ENCODE measurements at regions of chr14 and their contacts with region 1.

Region 1: DNA sequence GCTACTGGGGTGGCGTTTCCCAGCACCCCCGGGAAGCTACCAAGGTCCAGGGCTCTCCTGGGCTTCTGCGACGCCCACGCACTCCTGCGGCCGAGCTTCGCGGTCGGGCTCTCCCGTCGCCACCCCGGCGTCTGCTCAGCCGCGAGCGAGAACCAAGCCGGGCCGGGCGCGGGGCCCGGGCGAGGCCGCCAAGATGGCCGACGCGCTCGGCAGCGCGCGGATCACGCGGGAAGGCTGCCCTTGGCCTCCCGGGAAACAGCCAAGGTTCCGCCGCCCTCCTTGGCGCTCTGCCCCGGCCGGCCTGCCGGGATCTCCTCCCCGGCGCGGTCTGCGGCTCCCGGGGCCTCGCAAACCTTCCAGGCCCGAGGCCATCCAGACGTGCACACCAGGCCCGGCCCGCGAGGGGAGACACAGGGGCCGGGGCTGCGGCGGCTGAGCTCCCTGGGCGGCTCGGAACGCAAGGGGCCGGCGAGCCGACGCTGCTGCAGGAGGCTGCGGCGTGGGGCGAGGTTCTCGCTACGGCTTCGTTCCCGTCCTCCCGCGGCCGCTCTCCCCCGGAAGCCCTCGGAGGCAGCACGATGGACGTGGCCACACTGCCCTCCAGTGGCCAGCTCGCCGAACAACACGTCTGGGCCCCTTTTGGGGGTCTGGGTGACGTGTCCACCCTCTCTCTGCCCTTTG is 23.5 kb upstream of the ZFP36L1 start:
- DNase-seq: peak; percentile 84 to 88 (median 86)
- H3K4me3 ChIP-seq: peak overlapping the region; percentile 32 to 44
- H3K4me3 Mint-ChIP-seq: peak overlapping the region; percentile 82 to 93 (median 86)
- H3K27ac ChIP-seq: peak overlapping the region; percentile 81
- H3K27ac Mint-ChIP-seq: peak overlapping the region; percentile 95 to 98 (median 95)
- H3K4me1 ChIP-seq: peaks cover 88% of the 10 kb centered on the region
- H3K4me1 Mint-ChIP-seq: peaks cover 50 to 86% (median 67%) of the 10 kb centered on the region in 4 donors
- H3K27me3 ChIP-seq: no peaks in the 10 kb centered on the region
- H3K27me3 Mint-ChIP-seq: no peaks in the 10 kb centered on the region

Region 2: DNA sequence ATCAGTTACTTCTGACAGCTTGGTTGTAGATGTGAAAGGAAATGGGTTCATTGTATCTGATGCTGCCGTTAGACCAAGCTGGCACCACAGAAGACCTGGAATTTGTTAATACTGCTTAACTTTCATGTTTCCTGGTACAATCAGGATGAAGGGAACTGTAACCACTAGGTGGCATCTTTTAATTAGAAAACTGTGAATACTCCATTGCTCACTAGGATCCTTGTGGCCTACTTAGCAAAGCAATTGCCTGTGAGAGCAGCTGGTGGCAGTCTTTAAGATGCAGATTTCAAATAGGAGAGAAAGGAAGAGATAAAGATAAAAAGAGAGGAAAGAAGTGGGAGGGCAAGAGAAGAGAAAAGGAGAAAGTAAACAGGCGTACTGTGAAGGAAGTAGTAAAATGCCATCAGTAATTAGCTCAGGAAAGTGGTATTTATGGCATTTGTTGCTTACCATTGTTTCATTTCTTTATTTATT is 882.4 kb before region 1 on chr14:
- CTCF ChIA-PET with region 1: interaction called, 67 read pairs
- POLR2A ChIA-PET with region 1: interaction called, 8 read pairs
- intact Hi-C with region 1: loop called (anchors 1 kb)
- DNase-seq: peak in 4 of 5 donors; percentile 37 to 51 (median 46)
- H3K4me3 ChIP-seq: no peak overlapping the region
- H3K4me3 Mint-ChIP-seq: no peak overlapping the region
- H3K27ac ChIP-seq: no peak overlapping the region
- H3K27ac Mint-ChIP-seq: peak overlapping the region in 5 of 7 donors; percentile 9 to 94 (median 77)
- H3K4me1 ChIP-seq: peaks cover 7% of the 10 kb centered on the region
- H3K4me1 Mint-ChIP-seq: peaks cover 5 to 6% (median 5%) of the 10 kb centered on the region in 4 donors
- H3K27me3 ChIP-seq: no peaks in the 10 kb centered on the region
- H3K27me3 Mint-ChIP-seq: no peaks in the 10 kb centered on the region

Region 3: GRCh38 chr14:68268197-68268596 is 548.2 kb before region 1 on chr14:
- CTCF ChIA-PET with region 1: interaction called, 13 read pairs
- POLR2A ChIA-PET with region 1: interaction called, 11 read pairs
- intact Hi-C with region 1: no loop called
- DNase-seq: no peak
- H3K4me3 ChIP-seq: no peak overlapping the region
- H3K4me3 Mint-ChIP-seq: peak overlapping the region in 6 of 8 donors; percentile 18 to 58 (median 48)
- H3K27ac ChIP-seq: no peak overlapping the region
- H3K27ac Mint-ChIP-seq: peak overlapping the region; percentile 61 to 93 (median 85)
- H3K4me1 ChIP-seq: peaks cover 43% of the 10 kb centered on the region
- H3K4me1 Mint-ChIP-seq: peaks cover 29 to 55% (median 37%) of the 10 kb centered on the region in 4 donors
- H3K27me3 ChIP-seq: no peaks in the 10 kb centered on the region
- H3K27me3 Mint-ChIP-seq: no peaks in the 10 kb centered on the region

Region 4: GRCh38 chr14:68506021-68506644 is 310.3 kb before region 1 on chr14:
- CTCF ChIA-PET with region 1: interaction called, 17 read pairs
- POLR2A ChIA-PET with region 1: interaction called, 59 read pairs
- intact Hi-C with region 1: no loop called
- DNase-seq: peak in 2 of 5 donors; percentile 9 to 39
- H3K4me3 ChIP-seq: peak overlapping the region; percentile 15 to 28
- H3K4me3 Mint-ChIP-seq: peak overlapping the region; percentile 63 to 86 (median 74)
- H3K27ac ChIP-seq: peak overlapping the region; percentile 27
- H3K27ac Mint-ChIP-seq: peak overlapping the region; percentile 60 to 93 (median 89)
- H3K4me1 ChIP-seq: peaks cover 45% of the 10 kb centered on the region
- H3K4me1 Mint-ChIP-seq: peaks cover 40 to 63% (median 52%) of the 10 kb centered on the region in 4 donors
- H3K27me3 ChIP-seq: no peaks in the 10 kb centered on the region
- H3K27me3 Mint-ChIP-seq: no peaks in the 10 kb centered on the region

Region 5: DNA sequence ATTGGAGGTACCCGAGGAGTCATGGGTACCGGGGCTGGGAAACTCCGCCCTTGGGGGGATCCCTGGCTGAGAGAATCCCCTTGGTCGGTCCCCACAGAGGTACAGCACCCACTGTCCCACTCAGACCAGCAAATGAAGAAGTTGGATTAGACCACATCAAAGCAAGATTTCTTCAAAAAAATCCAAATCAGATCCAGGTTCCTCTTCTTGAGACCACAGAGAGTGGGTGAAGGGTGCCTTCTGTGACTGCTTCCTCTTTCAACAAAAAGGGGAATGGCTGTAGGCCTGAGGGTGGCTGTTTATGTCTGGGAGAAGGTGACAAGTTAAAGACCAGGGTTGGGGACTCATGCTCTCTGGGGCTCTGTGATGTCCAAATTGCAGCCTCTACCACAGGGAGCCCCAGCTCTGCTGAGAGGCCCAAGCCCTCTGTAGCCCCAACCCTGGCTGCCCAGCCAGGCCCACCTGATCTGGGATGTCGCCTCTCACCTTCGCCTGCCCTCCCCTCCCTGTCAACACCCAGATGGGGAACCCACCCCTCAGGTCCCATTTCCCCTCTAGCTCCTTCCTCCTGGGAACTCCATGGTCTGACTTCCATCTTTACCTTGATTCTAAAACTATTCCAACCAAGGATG is 74.4 kb before region 1 on chr14:
- CTCF ChIA-PET with region 1: no interaction called
- POLR2A ChIA-PET with region 1: no interaction called
- intact Hi-C with region 1: no loop called
- DNase-seq: no peak
- H3K4me3 ChIP-seq: no peak overlapping the region
- H3K4me3 Mint-ChIP-seq: no peak overlapping the region
- H3K27ac ChIP-seq: no peak overlapping the region
- H3K27ac Mint-ChIP-seq: peak overlapping the region in 1 of 7 donors; percentile 20
- H3K4me1 ChIP-seq: no peaks in the 10 kb centered on the region
- H3K4me1 Mint-ChIP-seq: peaks cover 0 to 9% (median 2%) of the 10 kb centered on the region in 4 donors
- H3K27me3 ChIP-seq: no peaks in the 10 kb centered on the region
- H3K27me3 Mint-ChIP-seq: peaks cover 0 to 2% of the 10 kb centered on the region in 2 donors

Region 6: DNA sequence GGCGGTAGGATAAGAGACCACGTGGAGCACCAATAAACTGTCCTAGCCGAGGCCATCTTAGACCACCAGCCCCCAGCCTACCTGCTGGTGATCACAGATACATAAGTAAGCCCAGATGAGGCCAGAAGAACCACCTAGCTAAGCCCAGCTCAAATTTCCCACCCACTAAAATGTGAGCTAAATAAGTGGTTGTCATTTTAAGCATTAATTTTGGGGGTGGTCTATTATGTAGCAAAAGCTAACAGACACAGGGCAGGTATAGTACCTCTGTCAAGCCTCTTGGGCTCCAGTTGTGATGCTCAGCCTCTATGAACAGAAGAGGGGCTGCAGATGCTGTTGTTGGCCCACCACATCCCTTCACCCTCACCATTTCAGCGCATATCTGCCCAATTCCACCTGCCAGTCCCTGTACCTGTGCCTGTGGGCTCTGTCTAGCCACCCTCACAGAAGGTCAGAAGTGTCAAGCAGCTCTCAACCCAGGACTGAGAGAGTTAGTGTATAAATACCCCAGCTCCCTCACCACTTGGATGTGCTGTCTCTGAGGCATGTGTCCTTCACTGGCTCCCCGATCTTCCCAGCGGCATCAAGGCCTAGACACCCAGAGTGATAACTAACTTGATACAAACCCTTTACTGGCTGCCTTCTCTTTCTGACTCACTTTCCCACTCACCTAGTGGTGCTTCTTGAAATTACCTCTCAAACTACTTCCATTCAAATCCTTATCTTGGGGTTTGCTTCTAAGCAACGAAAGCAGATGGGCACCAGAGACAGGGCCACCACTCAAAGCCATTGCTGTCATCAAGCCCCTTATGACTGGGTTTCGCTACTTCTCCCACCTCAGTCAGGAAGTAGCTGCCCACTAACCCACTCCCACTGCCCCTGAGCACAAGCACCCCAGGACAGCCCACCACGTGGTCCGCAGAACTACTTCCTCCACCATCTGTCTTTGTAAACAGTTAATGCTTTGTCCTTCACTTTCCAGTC is 41.0 kb before region 1 on chr14:
- CTCF ChIA-PET with region 1: interaction called, 83 read pairs
- POLR2A ChIA-PET with region 1: interaction called, 1,973 read pairs
- intact Hi-C with region 1: no loop called
- DNase-seq: no peak
- H3K4me3 ChIP-seq: no peak overlapping the region
- H3K4me3 Mint-ChIP-seq: peak overlapping the region in 2 of 8 donors; percentile 11 to 20
- H3K27ac ChIP-seq: no peak overlapping the region
- H3K27ac Mint-ChIP-seq: peak overlapping the region in 5 of 7 donors; percentile 29 to 84 (median 57)
- H3K4me1 ChIP-seq: peaks cover 90% of the 10 kb centered on the region
- H3K4me1 Mint-ChIP-seq: peaks cover 62 to 98% (median 77%) of the 10 kb centered on the region in 4 donors
- H3K27me3 ChIP-seq: no peaks in the 10 kb centered on the region
- H3K27me3 Mint-ChIP-seq: no peaks in the 10 kb centered on the region

Region 7: GRCh38 chr14:68843471-68844209 is 27.2 kb after region 1 on chr14:
- CTCF ChIA-PET with region 1: interaction called, 63 read pairs
- POLR2A ChIA-PET with region 1: interaction called, 11 read pairs
- intact Hi-C with region 1: loop called (anchors 1 kb)
- DNase-seq: peak; percentile 61 to 72 (median 66)
- H3K4me3 ChIP-seq: no peak overlapping the region
- H3K4me3 Mint-ChIP-seq: peak overlapping the region in 4 of 8 donors; percentile 39 to 75 (median 55)
- H3K27ac ChIP-seq: no peak overlapping the region
- H3K27ac Mint-ChIP-seq: peak overlapping the region in 4 of 7 donors; percentile 11 to 72 (median 59)
- H3K4me1 ChIP-seq: peaks cover 28% of the 10 kb centered on the region
- H3K4me1 Mint-ChIP-seq: peaks cover 18 to 37% (median 26%) of the 10 kb centered on the region in 4 donors
- H3K27me3 ChIP-seq: no peaks in the 10 kb centered on the region
- H3K27me3 Mint-ChIP-seq: peaks cover 1 to 2% of the 10 kb centered on the region in 2 donors

Region 8: DNA sequence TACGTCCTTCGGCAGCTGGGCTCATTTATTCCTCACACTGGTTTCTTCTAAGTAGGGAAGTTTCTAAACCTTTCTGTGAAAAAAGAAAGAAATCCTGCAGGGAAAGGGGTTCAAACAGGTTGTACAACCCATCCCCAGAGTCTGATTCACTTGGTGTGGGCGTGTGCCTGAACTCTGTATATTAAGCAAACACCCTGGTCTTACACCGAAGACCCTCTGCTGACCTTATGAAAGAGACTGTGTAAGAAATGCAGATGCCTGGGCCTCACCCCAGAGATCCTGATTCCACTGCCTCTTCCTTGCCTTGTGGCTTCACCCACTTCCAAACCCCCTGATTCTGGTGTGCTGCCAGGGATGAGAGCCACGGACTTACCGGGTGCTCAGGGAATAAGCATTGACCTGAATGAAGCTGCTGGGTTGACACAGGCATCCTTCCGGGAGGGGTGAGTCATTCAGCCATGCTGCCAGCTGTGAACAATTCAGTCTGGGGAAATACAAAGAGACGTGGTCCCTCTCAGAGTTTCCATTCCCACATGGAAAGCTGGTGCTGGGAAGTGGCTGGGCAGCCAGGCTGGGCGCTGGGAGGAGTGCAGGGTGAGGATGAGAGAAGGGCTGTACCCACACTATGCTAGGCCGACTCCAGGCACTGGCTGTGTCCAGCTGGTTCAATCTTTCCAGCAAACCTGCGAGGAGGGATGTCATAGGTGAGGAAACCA is 189.2 kb after region 1 on chr14:
- CTCF ChIA-PET with region 1: no interaction called
- POLR2A ChIA-PET with region 1: no interaction called
- intact Hi-C with region 1: no loop called
- DNase-seq: no peak
- H3K4me3 ChIP-seq: no peak overlapping the region
- H3K4me3 Mint-ChIP-seq: no peak overlapping the region
- H3K27ac ChIP-seq: no peak overlapping the region
- H3K27ac Mint-ChIP-seq: peak overlapping the region in 2 of 7 donors; percentile 51 to 83
- H3K4me1 ChIP-seq: no peaks in the 10 kb centered on the region
- H3K4me1 Mint-ChIP-seq: peaks cover 0 to 6% (median 2%) of the 10 kb centered on the region in 4 donors
- H3K27me3 ChIP-seq: no peaks in the 10 kb centered on the region
- H3K27me3 Mint-ChIP-seq: peaks cover 0 to 1% of the 10 kb centered on the region in 2 donors

Region 9: DNA sequence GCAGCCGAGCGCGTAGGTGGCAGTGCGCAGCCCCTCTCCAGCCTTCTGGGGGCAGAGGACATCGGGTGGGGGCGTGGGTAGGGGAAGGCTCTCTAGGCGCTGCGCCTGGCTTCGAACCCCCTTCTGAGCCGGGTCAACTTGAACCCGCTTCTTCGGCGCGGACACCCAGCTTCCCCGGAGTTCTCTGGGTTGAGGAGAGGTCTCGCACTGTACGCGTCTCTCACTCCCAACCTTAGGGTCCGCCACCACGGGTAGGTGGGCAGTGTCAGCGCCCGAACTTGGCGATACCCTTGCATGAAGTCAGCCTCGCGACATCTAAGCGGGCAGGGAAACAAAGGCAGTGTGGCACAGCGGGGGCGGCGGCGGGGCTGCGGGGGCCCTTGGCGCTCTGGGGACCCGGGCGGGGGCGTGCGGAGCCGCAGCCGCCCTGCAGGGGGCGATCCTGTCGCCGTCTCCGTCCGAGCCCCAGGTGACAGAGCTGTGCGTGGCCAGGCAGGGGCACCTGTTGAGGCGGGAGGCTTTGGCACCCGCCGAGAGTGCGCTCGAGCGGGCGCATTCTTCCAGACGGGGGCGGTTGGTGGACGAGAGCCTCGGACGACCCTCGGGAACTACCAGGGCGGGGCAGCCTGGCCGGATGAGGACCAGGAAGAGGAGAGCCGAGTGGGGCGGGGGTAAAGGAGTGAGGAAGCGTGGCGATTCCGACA is 444.6 kb after region 1 on chr14:
- CTCF ChIA-PET with region 1: no interaction called
- POLR2A ChIA-PET with region 1: no interaction called
- intact Hi-C with region 1: no loop called
- DNase-seq: peak in 4 of 5 donors; percentile 9 to 16 (median 12)
- H3K4me3 ChIP-seq: peak overlapping the region in 1 of 2 donors; percentile 19
- H3K4me3 Mint-ChIP-seq: peak overlapping the region; percentile 42 to 82 (median 71)
- H3K27ac ChIP-seq: no peak overlapping the region
- H3K27ac Mint-ChIP-seq: no peak overlapping the region
- H3K4me1 ChIP-seq: peaks cover 11% of the 10 kb centered on the region
- H3K4me1 Mint-ChIP-seq: peaks cover 0 to 16% (median 3%) of the 10 kb centered on the region in 4 donors
- H3K27me3 ChIP-seq: peaks cover 27% of the 10 kb centered on the region
- H3K27me3 Mint-ChIP-seq: peaks cover 33 to 56% of the 10 kb centered on the region in 2 donors

Measured in CD4-positive, alpha-beta memory T cell (primary cell).